ENCODE measurements at regions of chr1 and their contacts with region 1.

Region 1: DNA sequence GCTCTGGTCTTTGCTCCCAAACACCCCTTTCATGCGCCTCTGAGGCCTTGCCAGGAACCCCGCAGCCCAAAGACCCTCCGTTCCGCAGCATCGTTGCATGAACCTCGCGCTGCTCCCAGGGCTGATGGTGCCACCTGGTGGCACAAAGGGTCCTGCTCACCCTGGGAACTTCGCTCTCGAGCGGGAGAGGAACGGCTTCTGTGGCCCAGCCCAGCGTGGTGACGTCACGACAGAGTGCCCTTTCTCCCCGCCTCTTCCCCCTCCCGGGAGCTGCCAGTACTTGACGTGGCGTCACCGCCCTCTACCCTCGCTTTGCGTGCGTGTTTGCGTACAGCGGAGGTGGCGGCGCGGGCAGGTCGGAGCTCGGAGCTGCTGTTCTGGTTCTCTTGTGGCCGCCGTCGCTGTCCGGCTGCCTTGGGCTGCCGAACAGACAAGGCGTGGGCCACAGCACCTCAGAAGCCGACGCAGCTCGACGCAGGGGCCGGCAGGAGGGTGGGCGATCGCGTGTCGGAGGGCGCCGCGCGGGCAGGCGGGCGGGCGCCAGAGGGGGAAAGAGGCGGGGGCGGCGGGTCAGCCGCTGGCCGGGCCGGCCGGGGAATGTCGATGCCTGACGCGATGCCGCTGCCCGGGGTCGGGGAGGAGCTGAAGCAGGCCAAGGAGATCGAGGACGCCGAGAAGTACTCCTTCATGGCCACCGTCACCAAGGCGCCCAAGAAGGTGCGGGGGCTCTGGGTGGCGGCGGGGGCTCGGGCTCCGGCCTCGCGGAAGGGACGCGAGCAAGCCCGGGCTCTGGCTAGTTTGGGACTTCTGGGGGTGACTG is at the start of gene AHCYL1:
- DNase-seq: peak; percentile 100
- ATAC-seq: peak; percentile 99
- H3K4me3 Mint-ChIP-seq: peak within 1 kb of the TSS; percentile 92
- H3K27ac Mint-ChIP-seq: peak within 1 kb of the TSS; percentile 95
- H3K4me1 Mint-ChIP-seq: peaks cover 31% of the 10 kb centered on the region
- H3K27me3 Mint-ChIP-seq: no peaks in the 10 kb centered on the region
- total RNA-seq, gene AHCYL1: 79.1 to 82.6 TPM

Region 2: GRCh38 chr1:109350655-109351054 is 634.0 kb before region 1 on chr1:
- CTCF ChIA-PET with region 1: no interaction called
- POLR2A ChIA-PET with region 1: no interaction called
- intact Hi-C with region 1: no loop called
- DNase-seq: no peak
- ATAC-seq: no peak
- H3K4me3 Mint-ChIP-seq: no peak overlapping the region
- H3K27ac Mint-ChIP-seq: no peak overlapping the region
- H3K4me1 Mint-ChIP-seq: no peaks in the 10 kb centered on the region
- H3K27me3 Mint-ChIP-seq: peaks cover 2% of the 10 kb centered on the region

Region 3: DNA sequence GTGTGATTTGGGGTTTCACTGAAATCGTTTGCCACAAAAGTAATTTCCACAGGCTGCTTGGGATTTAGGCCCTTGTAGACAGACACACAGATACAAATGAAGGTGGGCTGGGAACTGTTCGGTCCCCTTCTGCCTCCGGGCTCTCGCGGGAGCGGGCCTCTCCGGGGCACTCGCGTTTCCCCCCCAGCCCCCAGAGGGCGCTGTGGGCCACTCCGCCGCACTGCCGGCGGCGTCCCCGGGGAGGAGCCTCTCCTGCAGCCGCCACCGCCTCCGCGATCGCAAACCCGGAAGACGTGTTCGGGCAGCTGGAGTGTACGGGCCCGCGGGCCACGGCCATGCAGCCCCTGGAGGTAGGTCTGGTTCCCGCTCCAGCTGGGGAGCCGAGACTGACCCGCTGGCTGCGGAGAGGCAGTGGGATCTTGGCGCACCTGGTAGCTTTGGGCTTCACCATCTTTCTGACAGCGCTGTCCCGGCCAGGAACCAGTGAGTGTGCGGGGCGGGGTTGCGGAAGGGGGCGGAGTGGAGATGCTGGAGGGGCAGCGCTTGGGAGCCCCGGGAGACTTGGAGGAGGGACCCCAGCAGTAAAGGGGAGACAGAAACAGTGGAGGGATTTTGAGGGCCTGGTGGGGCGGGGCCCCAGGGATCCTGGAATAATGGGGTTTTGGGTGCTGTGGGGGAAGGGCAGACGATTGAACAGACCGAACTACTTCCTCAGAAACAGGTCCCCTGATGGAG is 490.7 kb before region 1 on chr1 and contains the start of gene CYB561D1:
- CTCF ChIA-PET with region 1: interaction called, 3 read pairs
- POLR2A ChIA-PET with region 1: no interaction called
- intact Hi-C with region 1: loop called in 1 of 2 experiments (anchors 2 kb)
- DNase-seq: peak; percentile 95
- ATAC-seq: peak; percentile 89
- H3K4me3 Mint-ChIP-seq: peak within 1 kb of the TSS; percentile 98
- H3K27ac Mint-ChIP-seq: peak within 1 kb of the TSS; percentile 90
- H3K4me1 Mint-ChIP-seq: peaks cover 45% of the 10 kb centered on the region
- H3K27me3 Mint-ChIP-seq: no peaks in the 10 kb centered on the region
- total RNA-seq, gene CYB561D1: 7.1 to 8.7 TPM

Region 4: DNA sequence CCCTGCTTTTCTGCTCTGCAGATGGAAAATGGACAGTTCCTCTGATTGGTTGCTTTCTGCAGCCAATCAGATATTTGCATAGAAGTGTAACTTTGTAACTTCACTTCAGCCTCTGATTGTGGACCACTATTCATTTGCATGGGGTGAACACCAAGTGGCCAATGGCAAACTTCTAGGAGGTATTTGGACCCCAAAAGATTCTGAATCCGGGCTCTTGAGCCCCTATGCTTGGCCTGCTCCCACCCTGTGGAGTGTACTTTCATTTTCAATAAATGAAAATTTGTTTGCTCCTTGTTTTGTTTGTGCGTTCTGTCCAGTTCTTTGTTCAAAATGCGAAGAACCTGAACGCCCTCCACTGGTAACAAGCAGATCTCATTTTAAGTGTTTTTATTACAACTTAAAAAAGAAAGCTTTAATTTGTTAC is 335.2 kb before region 1 on chr1:
- CTCF ChIA-PET with region 1: interaction called, 19 read pairs
- POLR2A ChIA-PET with region 1: no interaction called
- intact Hi-C with region 1: no loop called
- DNase-seq: no peak
- ATAC-seq: no peak
- H3K4me3 Mint-ChIP-seq: no peak overlapping the region
- H3K27ac Mint-ChIP-seq: no peak overlapping the region
- H3K4me1 Mint-ChIP-seq: no peaks in the 10 kb centered on the region
- H3K27me3 Mint-ChIP-seq: peaks cover 3% of the 10 kb centered on the region

Region 5: DNA sequence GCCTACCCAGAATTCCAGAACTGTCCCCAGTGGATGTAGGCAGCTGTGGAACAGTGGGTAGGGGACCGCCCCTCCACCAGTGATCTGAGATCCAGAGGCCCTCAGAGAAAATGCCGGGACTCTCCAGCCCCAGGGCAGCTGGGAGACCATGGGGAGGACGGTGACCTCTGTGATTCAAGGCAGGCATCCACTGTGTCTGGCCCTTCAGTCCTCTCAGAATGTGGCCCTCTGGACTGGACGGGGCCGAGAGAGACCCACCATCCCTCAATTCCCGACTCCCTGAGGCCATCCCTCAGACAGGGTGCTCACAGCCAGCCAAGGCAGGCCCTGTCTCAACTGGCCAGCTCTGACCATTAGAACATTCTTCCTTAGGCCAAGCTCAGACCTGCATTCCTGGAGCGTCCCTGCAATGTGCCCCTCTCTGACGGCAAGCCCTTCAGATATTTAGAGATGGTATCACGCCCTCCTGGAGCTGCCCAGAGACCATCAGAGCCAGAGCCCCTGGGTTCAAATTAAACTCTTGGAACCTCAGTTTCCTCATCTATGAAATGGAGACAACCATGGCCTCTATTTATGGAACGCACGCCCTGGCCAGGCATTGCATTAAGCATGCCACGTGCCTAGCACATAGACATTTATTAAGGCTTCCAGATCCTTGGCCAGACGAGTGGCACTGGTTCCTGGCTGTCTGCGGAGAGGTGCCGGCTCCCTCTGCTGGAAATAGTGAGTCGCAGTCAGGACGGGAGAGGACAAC is 211.3 kb before region 1 on chr1:
- CTCF ChIA-PET with region 1: interaction called, 499 read pairs
- POLR2A ChIA-PET with region 1: interaction called, 6 read pairs
- intact Hi-C with region 1: loop called (anchors 1 kb)
- DNase-seq: peak; percentile 85
- ATAC-seq: peak; percentile 88
- H3K4me3 Mint-ChIP-seq: no peak overlapping the region
- H3K27ac Mint-ChIP-seq: no peak overlapping the region
- H3K4me1 Mint-ChIP-seq: no peaks in the 10 kb centered on the region
- H3K27me3 Mint-ChIP-seq: no peaks in the 10 kb centered on the region

Region 6: DNA sequence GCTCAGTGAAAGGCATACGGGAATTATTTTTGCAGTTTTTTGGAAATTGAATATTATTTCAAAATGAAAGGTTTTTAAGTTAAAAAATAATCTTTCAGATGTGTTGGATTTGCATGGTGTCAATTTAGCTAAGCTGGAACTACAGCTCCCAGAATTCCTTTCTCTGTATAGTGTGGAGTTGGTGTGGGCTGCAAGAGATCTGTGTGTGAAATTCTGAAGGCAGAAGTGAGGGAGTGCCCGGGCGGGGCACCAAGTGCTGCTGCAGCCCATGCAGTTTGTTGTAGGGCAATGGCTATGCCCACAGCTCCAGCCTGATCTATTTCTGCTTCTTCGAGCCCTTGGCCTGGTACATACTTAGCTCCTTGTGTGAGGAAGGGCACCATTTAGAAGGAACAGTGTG is 134.5 kb before region 1 on chr1:
- CTCF ChIA-PET with region 1: interaction called, 10 read pairs
- POLR2A ChIA-PET with region 1: interaction called, 3 read pairs
- intact Hi-C with region 1: no loop called
- DNase-seq: no peak
- ATAC-seq: peak; percentile 19
- H3K4me3 Mint-ChIP-seq: no peak overlapping the region
- H3K27ac Mint-ChIP-seq: no peak overlapping the region
- H3K4me1 Mint-ChIP-seq: peaks cover 10% of the 10 kb centered on the region
- H3K27me3 Mint-ChIP-seq: no peaks in the 10 kb centered on the region

Region 7: DNA sequence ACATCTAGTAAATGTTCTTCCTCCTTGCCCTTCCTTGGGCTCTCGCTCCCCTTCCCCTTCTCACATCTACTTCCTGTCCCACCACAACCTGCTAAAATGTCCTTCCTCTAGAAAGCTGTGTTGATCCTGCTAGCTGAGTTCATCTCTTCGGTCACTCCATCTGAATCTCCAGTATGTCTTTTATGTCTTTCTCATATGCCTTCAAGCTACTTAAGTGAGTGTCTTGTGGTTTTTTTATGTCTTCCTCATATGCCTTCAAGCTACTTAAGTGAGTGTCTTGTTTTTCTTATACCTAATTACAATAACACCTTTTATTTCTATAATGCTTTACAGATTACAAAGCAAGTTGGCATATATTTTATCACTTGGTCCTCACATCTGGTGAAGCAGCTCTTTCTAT is 40.1 kb before region 1 on chr1:
- CTCF ChIA-PET with region 1: interaction called, 11 read pairs
- POLR2A ChIA-PET with region 1: no interaction called
- intact Hi-C with region 1: no loop called
- DNase-seq: no peak
- ATAC-seq: peak; percentile 30
- H3K4me3 Mint-ChIP-seq: no peak overlapping the region
- H3K27ac Mint-ChIP-seq: peak overlapping the region; percentile 39
- H3K4me1 Mint-ChIP-seq: peaks cover 9% of the 10 kb centered on the region
- H3K27me3 Mint-ChIP-seq: peaks cover 4% of the 10 kb centered on the region

Region 8: DNA sequence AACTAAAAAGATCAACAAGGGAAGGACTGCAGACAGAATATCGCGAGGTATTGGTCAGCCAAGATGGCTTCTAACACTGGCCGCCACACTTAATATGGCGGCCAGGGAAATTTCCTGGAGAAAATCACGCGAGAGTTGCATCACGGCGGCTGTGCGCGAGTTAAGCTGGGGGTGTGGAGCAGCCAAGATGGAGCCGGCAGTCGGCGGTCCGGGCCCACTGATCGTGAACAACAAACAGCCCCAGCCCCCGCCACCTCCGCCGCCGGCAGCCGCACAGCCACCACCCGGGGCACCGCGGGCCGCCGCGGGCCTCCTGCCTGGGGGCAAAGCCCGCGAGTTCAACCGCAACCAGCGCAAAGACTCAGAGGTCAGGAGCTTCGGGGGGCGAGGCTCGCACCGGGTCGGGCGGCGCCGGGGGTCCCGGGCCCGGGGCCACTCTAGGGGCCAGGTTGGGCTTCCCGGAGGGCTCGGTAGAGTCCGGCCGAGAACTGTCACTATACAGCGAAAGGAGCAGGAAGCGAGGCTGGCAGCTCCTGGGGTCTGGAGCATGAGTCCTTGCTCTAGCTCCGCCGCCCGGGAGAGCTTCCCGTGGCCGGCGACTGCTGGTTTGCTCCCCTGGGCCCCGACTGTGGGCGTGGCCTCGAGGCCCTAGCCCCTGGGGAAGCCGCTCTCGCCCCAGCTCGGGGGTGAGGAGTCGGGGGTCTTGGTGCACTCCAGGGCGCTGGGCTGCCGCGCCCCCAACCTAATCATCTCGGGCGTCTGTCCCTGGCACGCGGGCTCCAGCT is 50.0 kb after region 1 on chr1 and contains the start of gene STRIP1:
- CTCF ChIA-PET with region 1: interaction called, 6 read pairs
- POLR2A ChIA-PET with region 1: interaction called, 22 read pairs
- intact Hi-C with region 1: loop called (anchors 1 kb)
- DNase-seq: peak; percentile 95
- ATAC-seq: peak; percentile 95
- H3K4me3 Mint-ChIP-seq: peak within 1 kb of the TSS; percentile 94
- H3K27ac Mint-ChIP-seq: peak within 1 kb of the TSS; percentile 95
- H3K4me1 Mint-ChIP-seq: peaks cover 47% of the 10 kb centered on the region
- H3K27me3 Mint-ChIP-seq: no peaks in the 10 kb centered on the region
- total RNA-seq, gene STRIP1: 20.7 to 21.5 TPM

Region 9: GRCh38 chr1:110176299-110176956 is 191.8 kb after region 1 on chr1:
- CTCF ChIA-PET with region 1: no interaction called
- POLR2A ChIA-PET with region 1: no interaction called
- intact Hi-C with region 1: no loop called
- DNase-seq: no peak
- ATAC-seq: no peak
- H3K4me3 Mint-ChIP-seq: no peak overlapping the region
- H3K27ac Mint-ChIP-seq: no peak overlapping the region
- H3K4me1 Mint-ChIP-seq: no peaks in the 10 kb centered on the region
- H3K27me3 Mint-ChIP-seq: peaks cover 3% of the 10 kb centered on the region

Region 10: GRCh38 chr1:110312188-110313121 is 327.8 kb after region 1 on chr1:
- CTCF ChIA-PET with region 1: no interaction called
- POLR2A ChIA-PET with region 1: no interaction called
- intact Hi-C with region 1: no loop called
- DNase-seq: peak; percentile 86
- ATAC-seq: peak; percentile 98
- H3K4me3 Mint-ChIP-seq: no peak overlapping the region
- H3K27ac Mint-ChIP-seq: no peak overlapping the region
- H3K4me1 Mint-ChIP-seq: no peaks in the 10 kb centered on the region
- H3K27me3 Mint-ChIP-seq: no peaks in the 10 kb centered on the region